ENCODE measurements at regions of chr17 and their contacts with region 1.

Region 1: DNA sequence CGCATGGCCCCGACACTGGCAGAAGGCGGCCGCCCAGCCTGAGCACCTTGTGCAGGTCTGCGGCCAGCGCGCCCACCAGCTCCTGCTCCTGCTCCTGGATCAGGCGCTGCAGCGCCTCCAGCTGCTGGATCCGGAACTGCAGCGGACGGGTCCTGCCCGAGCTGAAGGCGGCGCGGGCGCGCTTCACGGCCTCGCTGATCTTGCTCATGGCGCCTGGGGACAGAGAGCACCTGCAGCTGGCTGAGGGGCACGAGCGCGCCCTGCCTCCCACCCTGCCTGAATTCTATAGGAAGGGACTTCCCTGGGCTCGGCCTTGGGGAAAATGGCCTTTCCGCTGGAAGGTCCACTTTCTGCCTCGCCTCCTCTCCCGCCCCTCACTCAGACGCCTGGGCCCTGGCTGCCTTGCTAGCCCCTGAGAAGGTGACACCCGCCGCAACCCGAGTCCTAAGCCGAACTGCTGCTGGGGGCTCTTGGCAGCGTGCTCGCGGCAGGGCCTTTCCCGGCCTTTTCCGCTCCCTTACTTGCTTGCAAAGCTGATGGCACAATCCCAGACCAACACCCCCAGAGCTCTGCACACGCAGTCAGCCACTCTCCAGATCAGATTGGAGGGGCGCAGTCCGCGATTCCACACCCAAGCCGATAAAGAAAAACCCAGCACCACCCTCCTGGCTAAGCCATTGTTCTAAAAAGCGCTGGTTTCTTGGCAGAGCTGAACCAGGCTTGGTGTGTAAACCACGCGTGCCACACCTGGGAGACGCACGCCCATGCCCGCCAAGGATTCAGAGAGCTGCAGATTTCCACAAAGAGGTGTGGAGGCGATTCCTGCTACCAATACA is 3.0 kb downstream of the ALDH3A1 start:
- DNase-seq: peak; percentile 66
- H3K4me3 Mint-ChIP-seq: peak overlapping the region; percentile 29
- H3K27ac Mint-ChIP-seq: peak overlapping the region; percentile 39
- H3K4me1 Mint-ChIP-seq: peaks cover 42% of the 10 kb centered on the region
- H3K27me3 Mint-ChIP-seq: no peaks in the 10 kb centered on the region
- CTCF ChIP-seq: peak; percentile 74

Region 2: GRCh38 chr17:19706791-19707727 is 38.1 kb before region 1 on chr17:
- CTCF ChIA-PET with region 1: interaction called, 3 read pairs
- POLR2A ChIA-PET with region 1: interaction called, 12 read pairs
- intact Hi-C with region 1: no loop called
- DNase-seq: peak; percentile 87
- H3K4me3 Mint-ChIP-seq: no peak overlapping the region
- H3K27ac Mint-ChIP-seq: peak overlapping the region; percentile 27
- H3K4me1 Mint-ChIP-seq: peaks cover 10% of the 10 kb centered on the region
- H3K27me3 Mint-ChIP-seq: no peaks in the 10 kb centered on the region
- CTCF ChIP-seq: no peak